ENCODE measurements at regions of chr2 and their contacts with region 1.

Region 1: DNA sequence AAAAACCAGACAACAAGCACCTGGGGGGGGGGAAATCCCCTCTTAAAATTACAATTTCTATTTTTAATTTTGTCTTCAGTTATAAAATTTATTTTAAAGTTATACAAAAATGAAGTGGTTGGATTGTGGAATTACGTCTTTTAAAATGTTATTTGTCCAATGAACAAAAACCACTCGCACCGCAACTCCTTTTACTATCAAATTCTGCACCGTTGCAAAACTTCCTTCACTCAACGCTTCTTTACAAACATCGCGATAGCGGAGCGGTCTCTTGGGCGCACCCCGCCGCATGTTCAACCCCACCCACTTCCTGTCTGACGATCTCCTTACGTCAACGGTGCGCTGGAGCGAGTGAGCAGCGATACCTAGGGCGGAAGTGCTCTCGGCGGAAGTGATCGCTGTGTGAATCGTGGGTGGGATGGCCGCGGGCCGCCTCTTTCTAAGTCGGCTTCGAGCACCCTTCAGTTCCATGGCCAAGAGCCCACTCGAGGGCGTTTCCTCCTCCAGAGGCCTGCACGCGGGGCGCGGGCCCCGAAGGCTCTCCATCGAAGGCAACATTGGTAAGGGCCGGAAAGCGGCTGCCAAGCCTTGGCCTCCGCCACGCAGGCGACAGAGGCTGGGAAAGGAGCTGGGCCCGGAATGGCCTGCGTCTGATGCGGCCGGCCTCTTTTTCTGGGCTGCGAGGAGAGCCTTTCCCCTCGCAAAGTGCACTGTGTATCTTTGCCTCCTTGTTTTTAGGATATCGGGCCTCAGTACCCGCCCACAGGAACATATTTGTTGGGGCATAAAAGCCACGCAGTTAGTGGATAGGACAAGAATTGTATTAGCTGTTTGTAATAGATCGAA is at the start of gene DGUOK:
- DNase-seq: peak; percentile 81 to 99 (median 98)
- ATAC-seq: peak; percentile 99
- H3K4me3 ChIP-seq: peak within 1 kb of the TSS; percentile 87
- H3K4me3 Mint-ChIP-seq: peak within 1 kb of the TSS; percentile 80 to 97 (median 92)
- H3K27ac ChIP-seq: peak within 1 kb of the TSS; percentile 98
- H3K27ac Mint-ChIP-seq: peak within 1 kb of the TSS; percentile 79 to 99 (median 98)
- H3K4me1 ChIP-seq: peaks cover 37 to 41% of the 10 kb centered on the region in 2 donors
- H3K4me1 Mint-ChIP-seq: peaks cover 35 to 57% (median 52%) of the 10 kb centered on the region in 7 donors
- H3K27me3 ChIP-seq: no peaks in the 10 kb centered on the region
- H3K27me3 Mint-ChIP-seq: no peaks in the 10 kb centered on the region
- total RNA-seq, gene DGUOK: 43.1 to 73.9 (median 65.8) TPM

Region 2: DNA sequence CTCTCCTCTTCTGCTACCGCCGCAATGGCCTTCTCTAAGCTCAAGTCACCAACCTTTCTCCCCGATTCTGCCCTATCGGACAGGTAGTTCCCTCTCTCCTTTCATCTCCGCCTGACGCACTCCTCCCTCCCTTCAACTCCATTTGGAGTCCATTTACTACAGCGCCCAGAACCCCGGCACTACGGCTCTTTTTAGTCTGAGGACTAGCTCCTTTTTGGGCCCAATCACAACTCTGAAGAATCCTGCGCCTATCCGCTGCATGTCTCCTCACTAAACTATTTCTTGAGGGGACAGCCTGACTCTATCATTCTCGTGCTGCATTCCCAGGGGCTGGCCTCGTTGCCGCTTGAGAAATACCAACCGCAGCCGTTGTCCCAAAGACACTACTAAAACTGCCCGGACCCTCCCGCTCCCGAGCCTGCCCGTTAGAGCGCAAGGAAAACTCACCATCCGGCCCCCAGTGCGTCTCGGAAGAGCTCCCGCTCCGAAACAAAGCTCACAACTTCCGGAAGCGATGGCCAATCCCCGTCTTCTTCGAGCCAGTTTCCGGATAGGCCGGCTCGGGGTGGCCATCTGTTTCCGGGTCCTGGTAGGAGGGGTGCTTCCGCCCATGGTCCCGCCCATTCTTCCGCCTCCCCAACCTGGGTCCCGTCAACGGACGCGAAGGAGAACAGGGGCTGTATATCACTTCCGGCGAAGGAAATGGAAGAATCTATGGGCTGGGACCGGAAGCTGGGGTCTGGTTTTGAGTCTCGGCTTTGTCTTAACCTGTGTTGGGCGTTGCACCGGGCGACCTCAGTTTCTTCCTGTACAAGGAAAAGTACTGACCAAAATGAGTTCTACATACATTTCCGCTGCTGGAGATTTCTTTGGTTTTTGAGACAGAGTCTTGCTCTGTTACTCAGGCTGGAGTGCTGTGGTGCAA is 189.6 kb before region 1 on chr2 and contains the start of gene TPRKB:
- CTCF ChIA-PET with region 1: no interaction called
- POLR2A ChIA-PET with region 1: no interaction called
- intact Hi-C with region 1: loop called (anchors 1 to 2 kb)
- DNase-seq: peak; percentile 73 to 95 (median 94)
- ATAC-seq: peak; percentile 99
- H3K4me3 ChIP-seq: peak within 1 kb of the TSS; percentile 78
- H3K4me3 Mint-ChIP-seq: peak within 1 kb of the TSS; percentile 92 to 98 (median 98)
- H3K27ac ChIP-seq: peak within 1 kb of the TSS; percentile 67
- H3K27ac Mint-ChIP-seq: peak within 1 kb of the TSS; percentile 85 to 97 (median 91)
- H3K4me1 ChIP-seq: peaks cover 8 to 14% of the 10 kb centered on the region in 2 donors
- H3K4me1 Mint-ChIP-seq: peaks cover 10 to 31% (median 21%) of the 10 kb centered on the region in 7 donors
- H3K27me3 ChIP-seq: no peaks in the 10 kb centered on the region
- H3K27me3 Mint-ChIP-seq: peaks cover 0 to 2% (median 0%) of the 10 kb centered on the region in 5 donors
- total RNA-seq, gene TPRKB: 16.5 to 34.6 (median 27.5) TPM

Region 3: GRCh38 chr2:73970850-73971471 is 44.2 kb after region 1 on chr2:
- CTCF ChIA-PET with region 1: interaction called, 6 read pairs
- POLR2A ChIA-PET with region 1: interaction called, 5 read pairs
- intact Hi-C with region 1: loop called (anchors 1 to 2 kb)
- DNase-seq: peak in 7 of 9 donors; percentile 60 to 84 (median 72)
- ATAC-seq: peak; percentile 90
- H3K4me3 ChIP-seq: peak overlapping the region; percentile 36
- H3K4me3 Mint-ChIP-seq: peak overlapping the region; percentile 75 to 88 (median 81)
- H3K27ac ChIP-seq: peak overlapping the region; percentile 62
- H3K27ac Mint-ChIP-seq: peak overlapping the region; percentile 84 to 99 (median 93)
- H3K4me1 ChIP-seq: peaks cover 25 to 44% of the 10 kb centered on the region in 2 donors
- H3K4me1 Mint-ChIP-seq: peaks cover 48 to 88% (median 82%) of the 10 kb centered on the region in 7 donors
- H3K27me3 ChIP-seq: no peaks in the 10 kb centered on the region
- H3K27me3 Mint-ChIP-seq: no peaks in the 10 kb centered on the region

Region 4: DNA sequence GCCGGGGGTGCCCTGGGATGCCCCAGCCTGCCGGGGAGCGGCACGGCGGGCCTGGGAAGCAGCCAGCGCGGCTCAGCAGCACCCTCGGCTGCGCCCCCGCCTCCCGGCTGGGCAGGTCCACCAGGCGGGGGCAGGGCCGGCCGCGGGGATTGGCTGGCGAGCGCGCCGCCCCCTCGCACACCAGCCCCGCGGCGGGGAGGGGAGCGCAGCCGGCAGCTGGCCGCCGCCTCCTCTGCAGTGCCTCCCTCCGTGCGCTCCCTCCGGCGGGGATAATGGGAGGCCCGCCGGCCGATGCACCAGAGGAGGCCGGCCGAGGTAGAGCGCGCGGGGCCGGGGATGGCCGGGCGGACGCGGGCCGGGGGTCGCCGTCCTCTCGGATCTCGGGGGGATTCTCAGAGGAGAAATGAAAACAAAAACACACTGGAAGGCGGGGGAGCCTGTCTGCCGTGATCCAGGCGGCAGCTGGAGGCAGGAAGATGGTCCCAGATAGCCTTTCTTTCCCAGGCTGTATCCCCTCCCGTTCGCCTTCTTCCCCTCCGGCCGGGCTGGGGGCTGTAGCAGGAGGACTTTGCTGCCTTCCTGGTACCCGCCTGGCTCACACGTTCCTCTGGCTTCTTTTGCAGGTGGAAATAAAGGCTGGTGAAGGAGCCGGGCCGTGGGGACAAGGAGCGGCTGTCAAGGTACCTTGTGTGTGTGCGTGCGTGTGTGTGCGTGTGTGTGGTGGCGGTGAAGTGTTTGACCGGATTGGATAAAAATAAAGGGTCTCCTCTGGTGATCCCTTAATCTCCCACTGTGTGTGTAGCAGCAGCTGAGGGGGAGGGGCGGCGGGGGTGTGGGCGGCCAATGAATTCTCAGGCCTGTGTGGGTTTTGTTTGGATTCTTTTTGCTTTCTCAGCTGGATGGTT is 76.0 kb after region 1 on chr2:
- CTCF ChIA-PET with region 1: no interaction called
- POLR2A ChIA-PET with region 1: interaction called, 3 read pairs
- intact Hi-C with region 1: loop called (anchors 1 to 2 kb)
- DNase-seq: peak; percentile 71 to 89 (median 79)
- ATAC-seq: peak; percentile 95
- H3K4me3 ChIP-seq: peak overlapping the region; percentile 49
- H3K4me3 Mint-ChIP-seq: peak overlapping the region; percentile 82 to 95 (median 86)
- H3K27ac ChIP-seq: peak overlapping the region; percentile 67
- H3K27ac Mint-ChIP-seq: peak overlapping the region in 8 of 9 donors; percentile 59 to 92 (median 78)
- H3K4me1 ChIP-seq: peaks cover 9 to 35% of the 10 kb centered on the region in 2 donors
- H3K4me1 Mint-ChIP-seq: peaks cover 56 to 89% (median 75%) of the 10 kb centered on the region in 7 donors
- H3K27me3 ChIP-seq: no peaks in the 10 kb centered on the region
- H3K27me3 Mint-ChIP-seq: no peaks in the 10 kb centered on the region

Region 5: DNA sequence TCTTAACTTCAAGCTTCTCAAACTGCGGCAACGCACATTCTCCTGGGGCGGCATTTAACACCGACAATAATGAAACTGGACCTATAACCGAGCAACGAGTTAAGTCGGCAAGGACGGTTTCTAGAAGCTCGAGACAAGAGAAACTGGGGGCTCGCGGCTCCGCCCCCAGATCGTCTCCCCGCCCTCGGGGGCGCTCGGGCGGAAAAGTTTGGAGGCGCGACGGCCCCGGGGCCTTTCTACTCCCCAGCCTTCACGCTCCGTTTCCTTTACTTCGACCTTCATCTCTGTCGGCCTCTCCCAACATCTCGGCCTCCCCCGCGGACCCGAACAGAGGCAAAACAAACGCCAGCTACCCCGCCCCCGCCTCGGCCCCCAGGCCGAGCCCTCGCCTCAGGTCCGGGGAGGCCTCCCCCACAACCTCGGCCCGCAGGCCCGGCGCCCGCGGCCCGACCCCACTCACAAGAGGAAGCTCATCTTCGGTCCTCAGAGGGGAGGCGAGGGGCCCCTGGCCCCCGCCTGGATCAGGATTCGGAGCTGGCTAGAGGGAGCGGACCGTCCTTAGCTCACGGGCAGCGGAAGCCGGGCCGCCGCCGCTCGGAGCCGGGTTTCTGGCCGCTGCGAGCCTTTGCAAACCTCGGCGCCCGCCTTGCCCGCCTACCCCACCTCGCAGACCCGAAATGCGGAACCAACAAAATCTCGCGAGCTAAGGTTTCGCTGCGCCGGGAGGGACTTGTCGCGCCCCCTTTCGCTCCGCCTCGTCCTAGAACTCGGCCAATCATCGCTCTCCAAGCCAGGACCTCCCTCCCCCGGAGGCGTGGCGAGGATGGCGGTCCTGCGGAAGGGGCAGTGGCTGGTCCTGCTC is 251.7 kb after region 1 on chr2 and contains the start of gene MOB1A:
- CTCF ChIA-PET with region 1: no interaction called
- POLR2A ChIA-PET with region 1: interaction called, 4 read pairs
- intact Hi-C with region 1: loop called in 1 of 2 experiments (anchors 2 kb)
- DNase-seq: peak; percentile 94 to 98 (median 97)
- ATAC-seq: peak; percentile 97
- H3K4me3 ChIP-seq: peak within 1 kb of the TSS; percentile 89
- H3K4me3 Mint-ChIP-seq: peak within 1 kb of the TSS; percentile 86 to 95 (median 91)
- H3K27ac ChIP-seq: peak within 1 kb of the TSS; percentile 97
- H3K27ac Mint-ChIP-seq: peak within 1 kb of the TSS; percentile 82 to 95 (median 90)
- H3K4me1 ChIP-seq: peaks cover 25 to 37% of the 10 kb centered on the region in 2 donors
- H3K4me1 Mint-ChIP-seq: peaks cover 32 to 46% (median 35%) of the 10 kb centered on the region in 7 donors
- H3K27me3 ChIP-seq: no peaks in the 10 kb centered on the region
- H3K27me3 Mint-ChIP-seq: no peaks in the 10 kb centered on the region
- total RNA-seq, gene MOB1A: 113 to 185 (median 140) TPM

Region 6: GRCh38 chr2:74421221-74421870 is 494.6 kb after region 1 on chr2 and contains the starts of genes C2orf81 and WDR54:
- CTCF ChIA-PET with region 1: no interaction called
- POLR2A ChIA-PET with region 1: interaction called, 3 read pairs
- intact Hi-C with region 1: loop called in 1 of 2 experiments (anchors 1 kb)
- DNase-seq: peak; percentile 86 to 96 (median 95)
- ATAC-seq: peak; percentile 97
- H3K4me3 ChIP-seq: peak within 1 kb of the TSS; percentile 96
- H3K4me3 Mint-ChIP-seq: peak within 1 kb of the TSS; percentile 90 to 100 (median 98)
- H3K27ac ChIP-seq: peak within 1 kb of the TSS; percentile 97
- H3K27ac Mint-ChIP-seq: peak within 1 kb of the TSS; percentile 96 to 100 (median 99)
- H3K4me1 ChIP-seq: peaks cover 4 to 19% of the 10 kb centered on the region in 2 donors
- H3K4me1 Mint-ChIP-seq: peaks cover 14 to 44% (median 36%) of the 10 kb centered on the region in 7 donors
- H3K27me3 ChIP-seq: no peaks in the 10 kb centered on the region
- H3K27me3 Mint-ChIP-seq: no peaks in the 10 kb centered on the region
- total RNA-seq, gene C2orf81: 4.3 to 10.5 (median 6.8) TPM
- total RNA-seq, gene WDR54: 26.5 to 78.5 (median 30.8) TPM